Astrocyte of the cerebellum (primary cell): ENCODE measurements at regions of chr12 and their contacts with region 1.

Region 1: DNA sequence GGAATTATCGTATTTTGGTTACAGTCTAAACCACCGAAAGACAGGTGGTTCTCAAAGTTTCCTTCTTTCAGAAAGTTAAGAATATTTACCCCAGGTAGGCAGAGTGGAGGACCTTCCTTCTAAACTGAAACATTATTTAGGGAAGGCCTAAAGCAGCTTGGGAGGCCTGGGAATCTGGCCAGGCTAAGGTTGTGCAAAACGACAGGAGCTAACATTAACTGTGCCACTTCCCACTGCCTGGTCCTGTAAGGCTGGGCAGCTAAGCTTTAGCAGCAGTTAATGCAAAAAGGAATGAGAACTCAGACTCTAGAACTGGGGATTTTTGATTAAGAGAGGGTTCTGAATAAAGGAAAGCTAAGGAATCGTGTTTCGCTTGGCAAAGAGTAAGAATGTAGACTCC is 82.6 kb downstream of the SLCO1A2 start:
- DNase-seq: no peak
- H3K4me3 ChIP-seq: no peak overlapping the region
- CTCF ChIP-seq: no peak

Region 2: DNA sequence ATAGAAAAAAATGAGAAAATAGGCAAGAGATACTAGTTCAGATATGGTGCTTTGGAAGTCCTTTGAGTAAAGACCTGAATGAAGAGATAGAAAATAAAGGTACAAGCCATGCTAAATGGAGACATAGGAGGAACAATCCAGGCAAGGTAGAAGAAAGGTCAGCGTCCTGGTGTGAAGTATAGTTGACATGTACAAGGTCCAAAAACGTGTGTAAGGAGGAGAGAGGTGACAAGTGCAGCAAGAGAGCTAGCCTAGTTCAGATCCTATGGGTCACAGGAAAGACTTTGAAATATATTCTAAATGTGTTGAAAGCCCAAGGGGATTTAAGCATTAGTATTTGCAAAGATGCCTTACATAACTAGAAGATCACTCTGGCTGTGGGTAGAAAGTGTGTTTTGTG is 32.9 kb before region 1 on chr12:
- in situ Hi-C with region 1: loop called (anchors 5 kb)
- DNase-seq: no peak
- H3K4me3 ChIP-seq: no peak overlapping the region
- CTCF ChIP-seq: no peak